Vagina (tissue), 2 donors: ENCODE measurements at regions of chr1 and their contacts with region 1.

Region 1: GRCh38 chr1:199837311-199837710 is 190.2 kb upstream of the NR5A2 start:
- DNase-seq: no peak
- H3K4me3 ChIP-seq: no peak overlapping the region
- H3K27ac ChIP-seq: no peak overlapping the region
- H3K4me1 ChIP-seq: no peaks in the 10 kb centered on the region
- H3K27me3 ChIP-seq: no peaks in the 10 kb centered on the region
- CTCF ChIP-seq: no peak
- POLR2A ChIP-seq: no peak

Region 2: DNA sequence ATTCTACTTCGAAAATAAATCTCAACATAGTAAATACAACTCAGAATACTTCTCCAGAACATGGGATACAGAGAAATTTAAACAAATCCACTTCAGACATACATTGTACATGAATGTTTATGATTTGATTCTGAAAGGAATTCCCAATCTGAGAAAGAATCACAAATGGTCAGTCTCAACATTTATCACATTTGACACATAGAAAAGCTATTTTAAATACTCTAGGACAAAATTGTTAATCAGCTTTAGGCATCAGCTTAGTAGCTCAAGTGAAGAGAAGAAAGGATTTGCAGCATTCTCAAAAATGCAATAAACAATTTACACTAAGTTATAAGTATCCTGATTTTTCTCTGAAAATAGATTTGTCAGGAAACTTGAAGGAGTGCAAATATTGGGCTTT is 1013.7 kb before region 1 on chr1:
- intact Hi-C with region 1: no loop called
- DNase-seq: no peak
- H3K4me3 ChIP-seq: no peak overlapping the region
- H3K27ac ChIP-seq: no peak overlapping the region
- H3K4me1 ChIP-seq: no peaks in the 10 kb centered on the region
- H3K27me3 ChIP-seq: no peaks in the 10 kb centered on the region
- CTCF ChIP-seq: no peak
- POLR2A ChIP-seq: no peak

Region 3: DNA sequence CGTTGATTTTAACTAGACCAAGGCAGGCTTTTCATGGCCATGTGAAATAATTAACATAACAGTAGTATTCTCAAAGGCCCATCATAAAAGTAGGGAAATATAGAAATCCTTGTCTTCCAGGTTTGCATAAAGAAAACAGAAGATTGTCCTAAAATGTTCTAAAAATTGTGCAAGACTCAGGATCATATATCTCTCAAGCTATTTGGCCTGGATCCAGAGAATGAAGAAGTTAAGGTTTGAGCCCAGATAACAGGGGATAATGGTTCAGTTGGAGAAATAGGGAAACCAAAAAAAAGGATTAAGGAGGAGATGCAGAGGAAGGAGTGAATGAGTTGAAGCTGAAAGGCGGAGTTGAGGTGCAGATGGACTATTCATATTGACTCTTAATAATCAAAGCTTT is 365.3 kb before region 1 on chr1:
- intact Hi-C with region 1: no loop called
- DNase-seq: no peak
- H3K4me3 ChIP-seq: no peak overlapping the region
- H3K27ac ChIP-seq: no peak overlapping the region
- H3K4me1 ChIP-seq: no peaks in the 10 kb centered on the region
- H3K27me3 ChIP-seq: no peaks in the 10 kb centered on the region
- CTCF ChIP-seq: no peak
- POLR2A ChIP-seq: no peak

Region 4: DNA sequence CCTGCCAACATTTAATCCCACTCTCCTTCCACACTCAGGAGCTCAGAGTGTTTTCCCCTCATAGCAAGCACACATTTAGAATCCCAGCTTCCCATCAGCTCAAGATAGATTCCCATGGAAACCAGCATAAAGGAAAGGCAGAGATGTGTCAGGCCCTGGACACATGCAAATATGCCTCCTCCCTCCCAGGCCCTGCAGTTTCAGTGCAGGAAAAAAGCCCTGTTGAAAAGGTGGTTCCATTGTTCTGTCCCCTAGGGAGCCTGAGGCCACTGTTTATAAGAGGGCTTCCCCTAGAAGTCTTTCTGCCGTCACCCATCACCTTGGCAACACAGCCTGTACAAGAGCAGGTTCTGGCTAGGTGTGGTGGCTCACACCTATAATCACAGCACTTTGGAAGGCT is 1271.3 kb after region 1 on chr1:
- intact Hi-C with region 1: loop called (anchors 5 kb)
- DNase-seq: no peak
- H3K4me3 ChIP-seq: no peak overlapping the region
- H3K27ac ChIP-seq: no peak overlapping the region
- H3K4me1 ChIP-seq: peaks cover 3% of the 10 kb centered on the region
- H3K27me3 ChIP-seq: no peaks in the 10 kb centered on the region
- CTCF ChIP-seq: no peak
- POLR2A ChIP-seq: no peak